PC-9 (cell line): ENCODE measurements at regions of chr1 and their contacts with region 1.

Region 1: DNA sequence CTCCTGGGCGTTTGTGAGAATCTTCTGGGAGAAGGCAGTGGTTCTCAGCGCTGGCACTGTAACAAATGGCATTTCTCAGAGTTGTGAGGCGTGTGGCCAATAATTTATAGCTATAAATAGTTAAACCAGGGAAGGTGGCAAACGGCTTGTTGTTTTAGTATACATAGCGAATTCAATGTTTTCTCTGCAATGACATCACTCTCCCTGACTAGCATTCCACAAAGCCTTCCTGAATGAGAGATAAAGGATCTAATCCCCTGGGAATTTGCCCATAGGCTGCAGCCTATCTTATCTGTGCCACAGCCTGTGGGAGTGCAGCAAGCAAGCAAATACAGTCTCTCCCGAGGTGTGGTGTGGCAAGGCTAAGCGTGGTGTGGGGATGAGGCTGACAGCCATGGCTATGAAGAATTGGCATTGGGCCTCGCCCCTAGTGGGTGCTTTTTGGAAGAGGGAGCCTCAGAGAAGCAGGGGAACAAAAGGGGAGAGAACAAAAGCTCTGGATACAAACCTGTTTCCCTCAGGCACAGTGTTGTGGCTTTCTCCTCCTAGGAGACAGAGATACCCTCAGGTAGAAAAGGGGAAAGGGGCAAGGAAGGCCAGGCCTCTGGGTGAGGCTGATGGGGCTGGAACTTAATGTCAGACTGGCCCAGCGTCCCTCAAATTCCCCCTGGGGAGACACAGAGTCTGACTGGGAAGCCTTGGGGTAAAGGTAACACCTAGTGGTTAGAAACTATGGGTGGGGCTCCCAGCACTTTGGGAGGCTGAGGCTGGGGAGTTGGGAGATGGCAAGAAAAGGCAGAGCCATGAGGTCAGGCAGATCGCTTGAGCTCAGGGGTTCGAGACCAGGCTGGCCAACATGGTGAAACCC is 8.9 kb downstream of the TAGLN2 start:
- DNase-seq: peak; percentile 84 to 98
- H3K4me3 ChIP-seq: no peak overlapping the region
- H3K27ac ChIP-seq: peak overlapping the region; percentile 79
- H3K4me1 ChIP-seq: peaks cover 99% of the 10 kb centered on the region
- H3K27me3 ChIP-seq: no peaks in the 10 kb centered on the region
- CTCF ChIP-seq: no peak

Region 2: GRCh38 chr1:159900086-159900680 is 16.2 kb before region 1 on chr1 and contains the start of gene CFAP45:
- CTCF ChIA-PET with region 1: no interaction called
- POLR2A ChIA-PET with region 1: interaction called, 4 read pairs
- intact Hi-C with region 1: loop called (anchors 1 kb)
- DNase-seq: peak; percentile 87 to 94
- H3K4me3 ChIP-seq: peak within 1 kb of the TSS; percentile 53; the same call in 1 of the 2 replicates
- H3K27ac ChIP-seq: peak within 1 kb of the TSS; percentile 88
- H3K4me1 ChIP-seq: peaks cover 36% of the 10 kb centered on the region
- H3K27me3 ChIP-seq: no peaks in the 10 kb centered on the region
- CTCF ChIP-seq: no peak
- total RNA-seq, gene CFAP45: 8.2 and 9.3 TPM in 2 replicates

Region 3: DNA sequence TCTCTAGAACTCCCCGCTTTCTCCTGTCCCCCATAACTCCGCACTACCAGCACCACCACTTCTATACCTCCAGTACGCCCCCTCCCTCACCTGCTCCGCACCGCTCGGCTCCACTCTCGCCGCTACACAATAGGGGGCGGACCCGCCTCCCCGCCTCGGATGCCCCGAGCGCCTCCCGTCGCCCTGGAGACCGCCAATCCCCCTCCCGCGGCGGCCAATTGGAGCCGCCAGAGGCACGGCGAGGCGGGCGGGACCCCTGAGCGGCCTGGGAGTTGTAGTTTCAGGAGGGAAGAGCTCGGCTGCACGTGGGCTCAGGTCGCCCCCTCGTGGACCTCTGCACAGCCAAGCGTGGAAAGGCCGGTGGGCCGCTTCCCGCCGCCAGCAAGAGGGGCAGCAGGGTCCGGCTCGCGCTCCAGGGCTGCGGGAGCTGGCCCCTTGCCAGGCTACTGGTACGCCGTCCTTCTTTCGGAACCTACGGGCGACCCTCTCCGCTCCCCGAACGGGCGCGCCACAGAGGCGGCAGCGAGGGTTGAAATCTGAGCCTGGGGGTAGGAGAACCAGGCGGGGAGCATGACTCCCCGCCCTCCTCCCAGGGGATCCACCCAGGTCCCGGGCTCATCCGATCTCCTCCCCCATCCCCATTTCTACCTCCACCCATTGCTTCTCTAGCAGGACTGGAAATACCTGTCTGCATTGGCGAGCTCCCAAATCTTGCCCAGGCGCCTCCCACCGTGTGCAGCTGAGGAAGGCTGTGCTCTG is 29.2 kb after region 1 on chr1 and contains the start of gene IGSF9:
- CTCF ChIA-PET with region 1: no interaction called
- POLR2A ChIA-PET with region 1: interaction called, 11 read pairs
- intact Hi-C with region 1: no loop called
- DNase-seq: peak; percentile 90 to 94
- H3K4me3 ChIP-seq: peak within 1 kb of the TSS; percentile 76
- H3K27ac ChIP-seq: peak within 1 kb of the TSS; percentile 53
- H3K4me1 ChIP-seq: peaks cover 40% of the 10 kb centered on the region
- H3K27me3 ChIP-seq: no peaks in the 10 kb centered on the region
- CTCF ChIP-seq: peak; percentile 61
- total RNA-seq, gene IGSF9: 22.9 and 23.4 TPM in 2 replicates

Region 4: DNA sequence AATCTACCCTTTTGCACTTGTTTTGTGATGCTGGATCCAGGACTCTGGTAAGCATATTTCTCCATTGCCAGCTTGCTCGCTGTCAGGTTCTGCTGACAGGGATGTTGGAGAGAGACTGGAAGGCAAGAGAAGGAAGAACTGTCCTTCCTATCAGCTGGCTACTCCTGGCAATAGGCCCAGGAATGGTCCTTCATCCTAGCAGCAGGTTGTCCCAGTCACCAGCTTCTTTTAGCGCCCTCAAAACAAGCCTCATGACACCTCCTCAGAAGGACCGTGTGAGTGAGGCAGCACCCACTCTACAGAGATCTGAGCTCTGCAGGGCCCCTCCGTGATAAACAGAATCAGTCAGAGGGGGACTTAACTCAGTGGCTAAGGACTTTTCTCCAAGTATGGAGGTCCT is 70.8 kb after region 1 on chr1:
- CTCF ChIA-PET with region 1: no interaction called
- POLR2A ChIA-PET with region 1: no interaction called
- intact Hi-C with region 1: no loop called
- DNase-seq: no peak
- H3K4me3 ChIP-seq: no peak overlapping the region
- H3K27ac ChIP-seq: no peak overlapping the region
- H3K4me1 ChIP-seq: no peaks in the 10 kb centered on the region
- H3K27me3 ChIP-seq: no peaks in the 10 kb centered on the region
- CTCF ChIP-seq: no peak